ENCODE measurements at regions of chr7 and their contacts with region 1.

Region 1: GRCh38 chr7:74633451-74633921 is 24.0 kb upstream of the GTF2I start:
- DNase-seq: no peak
- ATAC-seq: no peak
- H3K4me3 ChIP-seq: no peak overlapping the region
- H3K27ac ChIP-seq: peak overlapping the region in 1 of 2 experiments; percentile 57; a peak in 2 of 6 replicates
- H3K4me1 ChIP-seq: peaks cover 26% of the 10 kb centered on the region
- CTCF ChIP-seq: no peak
- EP300 ChIP-seq: no peak
- POLR2A ChIP-seq: no peak
- RAD21 ChIP-seq: no peak

Region 2: GRCh38 chr7:74656837-74657691 is 23.6 kb after region 1 on chr7:
- CTCF ChIA-PET with region 1: interaction called, 4 read pairs
- POLR2A ChIA-PET with region 1: interaction called, 14 read pairs
- DNase-seq: peak; percentile 94 to 98
- ATAC-seq: peak; percentile 81 to 94
- H3K4me3 ChIP-seq: peak overlapping the region; percentile 93
- H3K27ac ChIP-seq: peak overlapping the region; percentile 98 to 99
- H3K4me1 ChIP-seq: peaks cover 47% of the 10 kb centered on the region
- CTCF ChIP-seq: no peak
- EP300 ChIP-seq: no peak
- POLR2A ChIP-seq: peak; percentile 64
- RAD21 ChIP-seq: no peak; a peak in 1 of 5 replicates

Region 3: DNA sequence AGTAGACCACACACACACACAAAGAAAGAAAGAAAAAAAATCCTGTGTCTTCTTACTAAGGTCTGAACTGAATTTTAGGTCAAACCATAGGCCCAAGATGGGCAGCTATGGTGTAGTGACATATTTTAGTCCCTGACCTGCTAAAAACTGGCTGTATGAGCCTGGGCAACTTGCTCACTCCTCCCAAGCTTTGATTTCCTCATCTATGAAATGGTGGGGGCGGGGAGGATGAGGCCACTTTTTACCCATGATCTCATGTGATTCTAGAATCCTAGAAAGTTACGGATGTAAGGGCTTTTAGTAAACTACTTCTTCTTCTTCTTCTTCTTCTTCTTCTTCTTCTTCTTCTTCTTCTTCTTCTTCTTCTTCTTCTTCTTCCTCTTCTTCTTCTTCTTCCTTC is 1186.2 kb after region 1 on chr7:
- CTCF ChIA-PET with region 1: no interaction called
- POLR2A ChIA-PET with region 1: no interaction called
- DNase-seq: no peak
- ATAC-seq: no peak
- H3K4me3 ChIP-seq: no peak overlapping the region
- H3K27ac ChIP-seq: no peak overlapping the region
- H3K4me1 ChIP-seq: 0 out of 3 replicates have a peak, but pooled peaks cover 4% of the 10 kb centered on the region
- CTCF ChIP-seq: no peak
- EP300 ChIP-seq: no peak
- POLR2A ChIP-seq: no peak
- RAD21 ChIP-seq: no peak